ENCODE measurements at regions of chr15 and their contacts with region 1.

Region 1: DNA sequence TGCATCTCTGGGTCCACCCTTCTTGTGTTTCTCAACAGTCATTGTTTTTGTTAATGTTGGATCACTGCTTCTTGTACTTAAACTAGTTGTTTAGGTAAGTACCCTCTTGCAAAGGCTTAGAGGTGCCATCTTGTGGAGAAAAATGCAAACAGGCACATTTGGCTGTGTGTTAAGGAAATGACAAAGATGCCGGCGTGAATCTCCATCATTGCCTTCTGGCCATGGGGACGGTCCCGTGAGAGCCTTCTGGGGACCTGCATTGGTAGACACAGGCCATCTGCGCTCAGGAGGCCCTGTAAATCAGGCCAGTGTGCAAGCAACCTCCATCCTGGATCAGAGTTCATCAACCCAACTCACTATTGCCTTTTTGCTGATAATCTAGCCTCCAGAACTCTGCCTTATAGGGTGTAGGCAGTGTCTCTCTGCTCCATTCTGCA is 158.6 kb upstream of the NR2E3 start:
- DNase-seq: peak; percentile 53
- H3K4me3 ChIP-seq: no peak overlapping the region
- H3K27ac ChIP-seq: no peak overlapping the region
- H3K4me1 ChIP-seq: no peaks in the 10 kb centered on the region
- H3K27me3 ChIP-seq: peaks cover 28% of the 10 kb centered on the region
- CTCF ChIP-seq: peak; percentile 66

Region 2: DNA sequence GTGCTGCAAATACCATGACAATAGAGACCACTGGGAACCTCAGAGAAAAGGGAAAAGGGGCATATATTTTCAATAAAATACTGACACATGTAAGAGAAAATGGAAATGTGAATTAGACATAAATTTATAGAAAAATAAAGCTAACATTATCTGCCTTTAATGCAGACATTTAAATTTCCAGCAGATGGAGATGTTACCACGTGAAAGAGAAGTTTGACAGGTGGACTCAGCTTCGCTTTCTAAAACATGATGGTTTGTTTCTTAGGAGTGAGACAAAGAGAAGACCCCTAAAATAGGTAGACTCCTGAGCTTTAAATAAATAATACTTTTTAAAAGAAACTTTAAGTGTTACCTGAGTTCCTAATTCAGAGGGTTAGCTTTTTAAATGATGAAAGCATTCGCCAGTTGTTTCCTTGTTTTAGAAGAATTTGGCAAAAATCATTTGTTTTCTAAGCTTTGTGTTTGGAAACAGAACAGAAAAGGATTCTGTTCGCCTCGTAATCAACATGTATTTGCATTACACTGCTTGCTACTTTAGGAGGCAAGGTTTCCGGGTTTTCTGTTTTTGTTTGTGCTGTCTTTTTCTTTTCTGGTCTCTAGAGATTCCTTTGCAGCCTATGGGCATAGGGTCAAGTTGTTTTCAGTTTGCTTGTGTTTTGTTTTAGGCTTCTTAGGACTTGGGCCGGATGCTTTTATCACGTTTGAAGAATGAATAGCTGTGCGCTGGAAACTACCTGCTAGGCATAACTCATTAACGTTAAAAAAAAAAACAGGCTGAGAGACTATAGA is 265.1 kb before region 1 on chr15:
- CTCF ChIA-PET with region 1: no interaction called
- POLR2A ChIA-PET with region 1: no interaction called
- intact Hi-C with region 1: loop called (anchors 5 kb)
- DNase-seq: peak; percentile 42
- H3K4me3 ChIP-seq: no peak overlapping the region
- H3K27ac ChIP-seq: no peak overlapping the region
- H3K4me1 ChIP-seq: peaks cover 28% of the 10 kb centered on the region
- H3K27me3 ChIP-seq: no peaks in the 10 kb centered on the region
- CTCF ChIP-seq: peak; percentile 64

Region 3: GRCh38 chr15:71448688-71449114 is 203.1 kb before region 1 on chr15:
- CTCF ChIA-PET with region 1: no interaction called
- POLR2A ChIA-PET with region 1: no interaction called
- intact Hi-C with region 1: loop called (anchors 5 kb)
- DNase-seq: peak; percentile 71
- H3K4me3 ChIP-seq: no peak overlapping the region
- H3K27ac ChIP-seq: no peak overlapping the region
- H3K4me1 ChIP-seq: no peaks in the 10 kb centered on the region
- H3K27me3 ChIP-seq: no peaks in the 10 kb centered on the region
- CTCF ChIP-seq: peak; percentile 81

Region 4: DNA sequence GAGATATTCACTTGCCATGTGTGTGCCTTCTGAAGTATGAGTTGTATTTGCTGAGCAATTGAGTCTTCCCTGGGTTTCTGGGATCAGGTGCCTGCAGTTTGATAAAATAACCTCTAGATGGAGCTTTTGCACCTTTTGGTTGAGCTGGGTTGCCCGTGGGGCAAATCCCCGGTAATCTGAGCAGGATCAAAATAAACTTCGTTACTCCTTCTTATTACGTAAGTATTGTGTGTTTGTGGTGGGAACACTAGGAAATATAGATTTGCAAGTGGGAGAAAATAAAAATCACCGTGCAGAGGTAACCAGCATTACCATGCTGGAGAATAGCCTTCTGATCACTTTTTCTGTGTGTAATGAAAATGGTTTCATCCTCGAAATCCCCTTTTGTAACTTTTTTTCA is 118.8 kb before region 1 on chr15:
- CTCF ChIA-PET with region 1: no interaction called
- POLR2A ChIA-PET with region 1: interaction called, 3 read pairs
- intact Hi-C with region 1: loop called (anchors 1 kb)
- DNase-seq: peak; percentile 50
- H3K4me3 ChIP-seq: no peak overlapping the region
- H3K27ac ChIP-seq: no peak overlapping the region
- H3K4me1 ChIP-seq: no peaks in the 10 kb centered on the region
- H3K27me3 ChIP-seq: peaks cover 37% of the 10 kb centered on the region
- CTCF ChIP-seq: peak; percentile 80

Region 5: GRCh38 chr15:71575474-71576045 is 76.2 kb before region 1 on chr15:
- CTCF ChIA-PET with region 1: no interaction called
- POLR2A ChIA-PET with region 1: no interaction called
- intact Hi-C with region 1: loop called (anchors 5 kb)
- DNase-seq: peak; percentile 24
- H3K4me3 ChIP-seq: no peak overlapping the region
- H3K27ac ChIP-seq: no peak overlapping the region
- H3K4me1 ChIP-seq: no peaks in the 10 kb centered on the region
- H3K27me3 ChIP-seq: peaks cover 77% of the 10 kb centered on the region
- CTCF ChIP-seq: peak; percentile 61

Region 6: DNA sequence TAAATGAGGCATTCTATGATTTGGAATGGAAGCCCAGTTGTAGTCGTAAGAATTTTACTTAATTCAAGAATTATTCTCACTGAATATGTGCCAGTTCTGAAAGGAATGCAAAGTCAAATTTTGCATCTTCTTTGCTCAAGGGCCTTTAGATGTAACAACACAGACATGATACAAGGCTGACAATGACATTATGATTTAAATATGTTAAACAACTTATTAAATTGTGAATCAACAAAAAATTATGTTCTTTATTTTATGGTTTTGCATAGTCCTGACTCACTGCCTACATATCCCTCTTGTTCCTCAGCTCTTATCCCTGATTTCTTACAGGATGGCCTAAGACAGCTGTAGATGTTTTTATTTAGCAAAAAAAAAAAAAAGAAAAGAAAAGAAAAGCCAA is 12.3 kb before region 1 on chr15:
- CTCF ChIA-PET with region 1: no interaction called
- POLR2A ChIA-PET with region 1: no interaction called
- intact Hi-C with region 1: no loop called
- DNase-seq: no peak
- H3K4me3 ChIP-seq: no peak overlapping the region
- H3K27ac ChIP-seq: no peak overlapping the region
- H3K4me1 ChIP-seq: peaks cover 11% of the 10 kb centered on the region
- H3K27me3 ChIP-seq: peaks cover 66% of the 10 kb centered on the region
- CTCF ChIP-seq: no peak

Region 7: GRCh38 chr15:72306211-72306785 is 654.5 kb after region 1 on chr15:
- CTCF ChIA-PET with region 1: no interaction called
- POLR2A ChIA-PET with region 1: no interaction called
- intact Hi-C with region 1: no loop called
- DNase-seq: peak; percentile 65
- H3K4me3 ChIP-seq: no peak overlapping the region
- H3K27ac ChIP-seq: no peak overlapping the region
- H3K4me1 ChIP-seq: no peaks in the 10 kb centered on the region
- H3K27me3 ChIP-seq: peaks cover 21% of the 10 kb centered on the region
- CTCF ChIP-seq: no peak